Activated CD8-positive, alpha-beta T cell treated with anti-CD3 and anti-CD28 coated beads, Interleukin-2, amount 10 ng/mL, durations not matched to agents 7 days and 5 days (primary cell): ENCODE measurements at regions of chr9 and their contacts with region 1.

Region 1: DNA sequence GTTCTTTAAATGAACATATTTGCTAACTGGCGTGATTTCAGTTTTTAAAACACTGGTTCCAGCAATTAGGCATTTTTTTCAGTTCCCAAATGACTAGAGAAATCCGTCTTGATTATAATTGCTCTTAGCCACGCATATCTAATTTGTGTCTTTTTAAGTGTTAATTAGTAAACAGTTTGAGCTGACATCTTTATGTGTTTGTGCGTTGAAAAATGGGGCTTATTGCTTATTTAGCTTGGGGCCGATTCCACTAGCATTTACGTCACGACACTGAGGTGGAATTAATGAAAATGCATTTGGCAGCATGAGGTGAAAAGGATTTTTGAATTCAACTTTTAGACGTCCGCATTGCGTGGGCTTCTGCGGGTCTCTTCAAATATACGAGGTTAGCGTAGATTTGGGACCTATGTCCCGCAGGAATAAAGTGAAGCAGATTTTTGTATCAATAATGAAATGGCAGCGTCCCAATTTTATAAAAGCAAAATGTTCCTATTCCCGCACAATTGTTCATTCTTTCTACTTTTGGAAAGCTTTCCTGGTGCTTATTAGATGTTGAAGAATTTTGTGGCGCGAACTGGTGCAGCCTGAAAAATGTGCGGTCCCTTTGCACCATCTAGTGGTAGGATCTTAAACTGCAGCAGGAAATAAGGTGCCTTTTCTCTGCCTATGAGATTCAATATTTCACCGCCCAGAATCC is 122.7 kb upstream of the LMX1B start:
- DNase-seq: peak; percentile 74
- ATAC-seq: peak; percentile 53
- H3K4me3 Mint-ChIP-seq: no peak overlapping the region
- H3K27ac Mint-ChIP-seq: no peak overlapping the region
- H3K4me1 Mint-ChIP-seq: peaks cover 22% of the 10 kb centered on the region
- H3K27me3 Mint-ChIP-seq: no peaks in the 10 kb centered on the region

Region 2: DNA sequence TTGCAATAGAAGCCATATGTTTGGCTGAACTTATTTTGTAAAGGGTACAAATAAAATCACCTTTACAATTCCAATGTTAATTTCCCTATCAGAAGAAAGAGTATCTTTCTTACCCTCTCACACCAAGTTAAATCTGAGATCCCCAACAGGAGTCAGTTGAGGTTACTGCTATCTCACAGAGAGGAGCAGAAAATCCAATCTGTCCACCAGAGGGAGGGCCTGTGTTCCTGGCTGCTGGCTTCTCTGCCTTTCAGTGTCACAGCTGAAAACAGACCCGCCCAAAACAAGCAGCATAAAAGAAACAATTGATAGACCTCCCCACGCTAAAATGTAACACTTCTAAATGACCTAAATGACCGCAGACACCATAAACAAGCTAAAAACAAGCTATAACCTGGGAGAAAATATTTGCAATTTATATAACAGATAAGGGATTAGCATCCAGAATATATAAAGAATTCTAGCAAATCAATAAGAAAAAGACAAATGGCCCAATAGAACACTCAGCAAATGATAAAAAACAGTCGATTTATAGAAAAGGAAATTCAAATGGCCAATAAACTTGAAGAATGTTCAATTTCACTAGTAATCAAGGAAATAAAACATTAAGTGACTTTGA is 188.9 kb before region 1 on chr9:
- CTCF ChIA-PET with region 1: interaction called, 56 read pairs
- POLR2A ChIA-PET with region 1: interaction called, 3 read pairs
- DNase-seq: peak; percentile 77
- ATAC-seq: peak; percentile 81
- H3K4me3 Mint-ChIP-seq: no peak overlapping the region
- H3K27ac Mint-ChIP-seq: no peak overlapping the region
- H3K4me1 Mint-ChIP-seq: peaks cover 14% of the 10 kb centered on the region
- H3K27me3 Mint-ChIP-seq: peaks cover 11% of the 10 kb centered on the region

Region 3: GRCh38 chr9:126317513-126317912 is 173.5 kb before region 1 on chr9:
- CTCF ChIA-PET with region 1: interaction called, 45 read pairs
- POLR2A ChIA-PET with region 1: no interaction called
- DNase-seq: peak; percentile 54
- ATAC-seq: peak; percentile 53
- H3K4me3 Mint-ChIP-seq: no peak overlapping the region
- H3K27ac Mint-ChIP-seq: no peak overlapping the region
- H3K4me1 Mint-ChIP-seq: peaks cover 26% of the 10 kb centered on the region
- H3K27me3 Mint-ChIP-seq: peaks cover 9% of the 10 kb centered on the region

Region 4: DNA sequence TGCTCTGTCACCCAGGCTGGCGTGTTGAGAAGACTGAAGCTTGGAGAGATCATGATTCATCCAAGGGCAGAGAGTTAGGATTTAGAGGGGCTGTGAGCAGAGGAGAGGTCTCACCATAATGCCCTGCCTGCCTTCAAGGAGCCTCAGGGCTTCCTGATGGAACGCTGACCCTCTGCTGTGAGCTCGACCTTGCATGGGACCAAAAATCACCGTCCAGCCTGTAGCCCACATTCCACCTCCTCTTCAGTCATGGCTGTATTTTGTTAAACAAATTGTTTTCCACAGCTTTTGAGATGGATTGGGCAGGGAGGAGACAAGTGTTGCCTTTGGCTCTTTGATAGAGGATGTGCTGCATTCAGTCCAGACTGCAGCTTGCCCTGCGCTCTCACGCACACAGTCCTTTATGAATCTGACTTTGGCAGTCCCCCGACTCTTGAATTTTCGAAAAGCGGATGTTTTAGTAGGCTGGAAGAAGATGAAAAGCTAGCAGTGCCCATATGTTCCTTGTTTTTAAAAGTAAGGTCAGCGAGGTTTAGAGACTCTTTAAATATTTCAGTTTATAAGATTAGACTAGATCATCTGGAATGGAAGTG is 84.8 kb before region 1 on chr9:
- CTCF ChIA-PET with region 1: interaction called, 142 read pairs
- POLR2A ChIA-PET with region 1: no interaction called
- DNase-seq: no peak
- ATAC-seq: no peak
- H3K4me3 Mint-ChIP-seq: no peak overlapping the region
- H3K27ac Mint-ChIP-seq: no peak overlapping the region
- H3K4me1 Mint-ChIP-seq: peaks cover 51% of the 10 kb centered on the region
- H3K27me3 Mint-ChIP-seq: no peaks in the 10 kb centered on the region

Region 5: DNA sequence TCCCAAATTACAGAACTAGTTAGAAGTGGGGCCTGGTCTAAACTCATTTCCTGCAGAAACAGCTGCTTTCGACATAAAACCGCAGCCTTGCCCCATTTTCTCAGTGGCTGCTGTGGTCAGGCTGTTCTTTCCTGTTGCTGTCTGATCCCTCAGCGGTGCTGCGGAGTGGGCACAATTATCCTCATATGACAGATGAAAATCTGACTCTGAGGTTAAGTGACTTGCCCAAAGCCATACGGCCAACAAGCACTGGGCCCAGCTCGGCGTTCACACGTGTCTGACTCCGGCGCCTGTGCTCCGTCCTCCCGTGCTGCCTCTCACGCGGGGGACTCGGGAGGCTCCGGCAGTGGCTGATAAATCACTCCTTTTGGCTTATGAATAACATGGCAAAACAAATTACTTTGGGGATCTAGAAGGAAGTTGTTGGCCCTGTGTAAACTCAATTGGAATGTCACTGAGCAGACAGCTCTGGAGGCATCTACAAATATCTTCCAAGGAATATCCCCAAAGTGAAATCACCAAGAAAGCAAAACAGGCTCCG is 19.9 kb before region 1 on chr9:
- CTCF ChIA-PET with region 1: interaction called, 67 read pairs
- POLR2A ChIA-PET with region 1: no interaction called
- DNase-seq: peak; percentile 92
- ATAC-seq: peak; percentile 87
- H3K4me3 Mint-ChIP-seq: peak overlapping the region; percentile 55
- H3K27ac Mint-ChIP-seq: peak overlapping the region; percentile 93
- H3K4me1 Mint-ChIP-seq: peaks cover 76% of the 10 kb centered on the region
- H3K27me3 Mint-ChIP-seq: no peaks in the 10 kb centered on the region

Region 6: DNA sequence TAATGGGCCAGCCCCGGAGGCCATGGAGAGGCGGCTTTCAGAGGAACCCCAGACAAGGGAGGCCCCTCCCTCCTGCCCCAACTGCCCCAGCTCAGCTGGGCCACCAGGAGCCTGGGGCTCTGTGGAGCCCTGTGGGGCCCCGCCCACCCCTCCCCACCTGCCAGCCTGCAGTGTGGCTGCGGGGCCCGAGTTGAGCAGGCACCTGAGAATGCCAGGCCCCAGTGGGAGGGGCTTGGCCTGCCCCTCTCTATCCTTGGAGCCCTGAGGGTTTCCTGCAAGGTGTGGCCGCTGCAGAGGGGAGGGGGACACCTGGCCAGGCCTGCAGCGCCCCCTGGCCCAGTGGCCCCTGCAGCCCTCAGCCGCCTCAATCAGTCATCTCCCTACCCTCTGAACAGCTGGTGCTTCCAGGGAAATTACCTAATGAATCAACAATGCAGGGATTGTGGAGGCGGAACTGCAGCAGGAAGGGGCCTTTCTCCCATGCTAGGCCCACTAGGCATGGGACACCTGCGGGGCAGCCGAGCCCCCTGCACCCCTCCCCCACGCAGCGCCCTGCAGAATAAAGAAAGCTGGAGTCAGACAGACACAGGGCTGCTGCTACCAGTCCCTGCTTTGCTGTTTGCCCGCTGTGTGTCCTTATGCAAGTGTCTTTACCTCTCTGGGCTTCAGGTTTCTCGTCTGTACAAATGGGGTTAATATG is 170.7 kb after region 1 on chr9:
- CTCF ChIA-PET with region 1: no interaction called
- POLR2A ChIA-PET with region 1: no interaction called
- DNase-seq: no peak
- ATAC-seq: no peak
- H3K4me3 Mint-ChIP-seq: no peak overlapping the region
- H3K27ac Mint-ChIP-seq: no peak overlapping the region
- H3K4me1 Mint-ChIP-seq: no peaks in the 10 kb centered on the region
- H3K27me3 Mint-ChIP-seq: peaks cover 26% of the 10 kb centered on the region